Activated CD4-positive, alpha-beta memory T cell treated with anti-CD3 and anti-CD28 coated beads, Interleukin-2, amount 10 ng/mL, durations not matched to agents 7 days and 5 days (primary cell): ENCODE measurements at regions of chr1 and their contacts with region 1.

Region 1: GRCh38 chr1:150162862-150163706 is 13.4 kb downstream of the PLEKHO1 start:
- DNase-seq: no peak
- H3K4me3 Mint-ChIP-seq: no peak overlapping the region
- H3K27ac Mint-ChIP-seq: no peak overlapping the region
- H3K4me1 Mint-ChIP-seq: peaks cover 63% of the 10 kb centered on the region
- H3K27me3 Mint-ChIP-seq: peaks cover 2% of the 10 kb centered on the region

Region 2: DNA sequence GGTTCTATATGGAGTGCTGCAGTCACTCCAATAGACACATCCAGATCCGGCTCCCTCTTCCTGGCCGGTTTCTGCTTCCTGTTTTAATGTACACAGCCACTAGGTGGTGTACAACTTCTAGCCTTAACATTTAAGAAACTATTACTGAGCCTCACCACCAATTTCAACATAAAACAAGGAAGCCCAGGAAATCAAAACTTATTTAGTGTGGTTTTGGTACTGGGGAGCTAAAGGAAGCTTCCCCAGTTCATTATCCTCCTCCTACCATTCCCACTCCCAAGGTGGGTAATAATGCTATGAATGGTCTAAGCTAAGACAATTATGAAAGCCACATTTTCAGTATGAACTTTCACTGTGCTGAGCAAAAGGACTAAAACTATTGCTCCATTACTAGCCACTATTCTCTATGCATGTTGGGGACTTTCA is 200.9 kb before region 1 on chr1:
- CTCF ChIA-PET with region 1: interaction called, 13 read pairs
- POLR2A ChIA-PET with region 1: no interaction called
- DNase-seq: peak; percentile 54
- H3K4me3 Mint-ChIP-seq: no peak overlapping the region
- H3K27ac Mint-ChIP-seq: no peak overlapping the region
- H3K4me1 Mint-ChIP-seq: peaks cover 23% of the 10 kb centered on the region
- H3K27me3 Mint-ChIP-seq: no peaks in the 10 kb centered on the region

Region 3: DNA sequence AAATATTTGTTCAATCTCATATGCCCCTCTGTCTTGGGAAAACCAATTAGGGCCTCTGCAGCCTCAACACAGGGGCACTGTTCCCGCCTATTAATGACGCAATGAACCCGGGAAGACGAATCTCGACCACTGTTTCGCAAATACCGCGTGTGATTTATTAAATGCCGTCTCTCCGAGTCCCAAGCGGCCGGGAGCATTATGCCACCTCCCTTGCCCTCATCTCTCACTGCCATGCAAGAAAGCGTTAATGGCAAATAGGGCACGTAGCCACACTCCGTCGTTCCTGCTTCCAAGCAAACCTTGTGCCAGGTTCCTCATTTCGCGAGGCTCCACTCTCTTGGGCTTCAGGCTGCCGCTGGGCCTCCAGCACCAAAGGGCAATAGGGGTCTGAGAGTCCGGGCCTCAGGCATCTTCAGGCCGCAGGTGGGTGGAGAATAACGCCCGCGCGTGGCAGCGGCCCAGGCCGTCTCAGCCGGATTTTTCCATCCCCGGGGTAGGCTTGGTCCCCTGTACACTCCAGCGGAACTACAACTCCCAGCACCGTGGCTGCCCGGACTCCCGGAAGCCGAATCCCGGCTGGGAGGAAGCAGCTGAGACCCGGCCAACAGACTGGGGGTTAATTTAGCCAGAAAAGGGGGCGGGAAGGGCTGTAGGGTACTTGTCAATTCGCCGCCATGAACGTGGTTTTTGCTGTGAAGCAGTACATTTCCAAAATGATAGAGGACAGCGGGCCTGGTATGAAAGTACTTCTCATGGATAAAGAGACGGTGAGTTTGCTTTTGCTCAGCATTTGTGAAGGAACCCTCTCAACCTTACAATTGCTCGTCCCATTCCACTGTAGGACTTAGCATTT is 95.7 kb before region 1 on chr1 and contains the start of gene VPS45:
- CTCF ChIA-PET with region 1: interaction called, 225 read pairs
- POLR2A ChIA-PET with region 1: interaction called, 11 read pairs
- DNase-seq: peak; percentile 86
- H3K4me3 Mint-ChIP-seq: peak within 1 kb of the TSS; percentile 95
- H3K27ac Mint-ChIP-seq: peak within 1 kb of the TSS; percentile 89
- H3K4me1 Mint-ChIP-seq: peaks cover 39% of the 10 kb centered on the region
- H3K27me3 Mint-ChIP-seq: no peaks in the 10 kb centered on the region
- total RNA-seq, gene VPS45: 35.4 to 39.0 TPM

Region 4: GRCh38 chr1:150072959-150073358 is 90.1 kb before region 1 on chr1:
- CTCF ChIA-PET with region 1: interaction called, 225 read pairs
- POLR2A ChIA-PET with region 1: interaction called, 11 read pairs
- DNase-seq: no peak
- H3K4me3 Mint-ChIP-seq: no peak overlapping the region
- H3K27ac Mint-ChIP-seq: peak overlapping the region; percentile 24
- H3K4me1 Mint-ChIP-seq: peaks cover 47% of the 10 kb centered on the region
- H3K27me3 Mint-ChIP-seq: no peaks in the 10 kb centered on the region

Region 5: GRCh38 chr1:150149271-150150132 is 13.6 kb before region 1 on chr1 and contains the start of gene PLEKHO1:
- CTCF ChIA-PET with region 1: interaction called, 5 read pairs
- POLR2A ChIA-PET with region 1: interaction called, 47 read pairs
- DNase-seq: peak; percentile 87
- H3K4me3 Mint-ChIP-seq: peak within 1 kb of the TSS; percentile 86
- H3K27ac Mint-ChIP-seq: peak within 1 kb of the TSS; percentile 93
- H3K4me1 Mint-ChIP-seq: peaks cover 66% of the 10 kb centered on the region
- H3K27me3 Mint-ChIP-seq: peaks cover 1% of the 10 kb centered on the region
- total RNA-seq, gene PLEKHO1: 89.8 to 92.9 TPM

Region 6: DNA sequence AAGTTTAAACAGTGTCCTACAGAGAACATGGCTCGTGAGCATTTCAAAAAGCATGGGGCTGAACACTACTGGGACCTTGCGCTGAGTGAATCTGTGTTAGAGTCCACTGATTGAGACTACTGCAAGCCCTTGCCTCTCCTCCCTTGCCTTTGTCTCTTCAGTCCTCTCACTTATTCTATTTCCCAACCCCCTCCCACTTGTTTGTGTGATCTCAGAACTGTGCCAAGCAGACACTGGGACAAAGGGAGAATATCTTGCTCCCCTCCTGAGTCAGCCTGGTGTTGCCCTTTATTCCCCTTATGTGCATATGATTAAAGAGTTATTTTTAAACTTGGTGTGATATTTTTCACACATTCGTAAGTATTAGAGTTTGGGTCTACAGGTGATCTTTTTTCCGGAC is 189.8 kb after region 1 on chr1:
- CTCF ChIA-PET with region 1: no interaction called
- POLR2A ChIA-PET with region 1: no interaction called
- DNase-seq: no peak
- H3K4me3 Mint-ChIP-seq: no peak overlapping the region
- H3K27ac Mint-ChIP-seq: no peak overlapping the region
- H3K4me1 Mint-ChIP-seq: no peaks in the 10 kb centered on the region
- H3K27me3 Mint-ChIP-seq: no peaks in the 10 kb centered on the region